ENCODE measurements at regions of chr14 and their contacts with region 1.

Region 1: GRCh38 chr14:21455911-21456667 is at the start of gene CHD8:
- DNase-seq: peak; percentile 100
- ATAC-seq: peak; percentile 99
- H3K4me3 ChIP-seq: peak within 1 kb of the TSS; percentile 90 to 95 (median 93)
- H3K27ac ChIP-seq: peak within 1 kb of the TSS; percentile 96
- H3K4me1 ChIP-seq: peaks cover 38% of the 10 kb centered on the region
- H3K27me3 ChIP-seq: no peaks in the 10 kb centered on the region; a peak in 1 of 5 replicates
- CTCF ChIP-seq: peak; percentile 96
- EP300 ChIP-seq: peak in 1 of 2 experiments; percentile 46; a peak in 1 of 4 replicates
- POLR2A ChIP-seq: peak; percentile 91 to 95
- RAD21 ChIP-seq: peak; percentile 63
- total RNA-seq, gene CHD8: 79.6 and 92.9 TPM in 2 replicates

Region 2: GRCh38 chr14:21383848-21384493 is 72.1 kb before region 1 on chr14 and contains the start of gene SUPT16H:
- CTCF ChIA-PET with region 1: no interaction called
- POLR2A ChIA-PET with region 1: interaction called, 14 read pairs
- in situ Hi-C with region 1: no loop called
- intact Hi-C with region 1: no loop called
- DNase-seq: peak; percentile 94
- ATAC-seq: peak; percentile 91
- H3K4me3 ChIP-seq: peak within 1 kb of the TSS; percentile 74 to 97 (median 90)
- H3K27ac ChIP-seq: peak within 1 kb of the TSS; percentile 92
- H3K4me1 ChIP-seq: peaks cover 43% of the 10 kb centered on the region
- H3K27me3 ChIP-seq: no peaks in the 10 kb centered on the region; a peak in 1 of 5 replicates
- CTCF ChIP-seq: peak; percentile 11; the same call in 1 of the 2 replicates
- EP300 ChIP-seq: peak in 1 of 2 experiments; percentile 25; a peak in 2 of 4 replicates
- POLR2A ChIP-seq: peak; percentile 80 to 92
- RAD21 ChIP-seq: peak; percentile 46; the same call in 1 of the 2 replicates
- total RNA-seq, gene SUPT16H: 230 and 340 TPM in 2 replicates

Region 3: GRCh38 chr14:21408147-21408546 is 47.9 kb before region 1 on chr14:
- CTCF ChIA-PET with region 1: no interaction called
- POLR2A ChIA-PET with region 1: no interaction called
- in situ Hi-C with region 1: no loop called
- intact Hi-C with region 1: no loop called
- DNase-seq: no peak
- ATAC-seq: no peak; the same call in 2 of the 3 replicates
- H3K4me3 ChIP-seq: no peak overlapping the region
- H3K27ac ChIP-seq: no peak overlapping the region
- H3K4me1 ChIP-seq: no peaks in the 10 kb centered on the region
- H3K27me3 ChIP-seq: no peaks in the 10 kb centered on the region
- CTCF ChIP-seq: no peak
- EP300 ChIP-seq: no peak
- POLR2A ChIP-seq: no peak
- RAD21 ChIP-seq: no peak

Region 4: DNA sequence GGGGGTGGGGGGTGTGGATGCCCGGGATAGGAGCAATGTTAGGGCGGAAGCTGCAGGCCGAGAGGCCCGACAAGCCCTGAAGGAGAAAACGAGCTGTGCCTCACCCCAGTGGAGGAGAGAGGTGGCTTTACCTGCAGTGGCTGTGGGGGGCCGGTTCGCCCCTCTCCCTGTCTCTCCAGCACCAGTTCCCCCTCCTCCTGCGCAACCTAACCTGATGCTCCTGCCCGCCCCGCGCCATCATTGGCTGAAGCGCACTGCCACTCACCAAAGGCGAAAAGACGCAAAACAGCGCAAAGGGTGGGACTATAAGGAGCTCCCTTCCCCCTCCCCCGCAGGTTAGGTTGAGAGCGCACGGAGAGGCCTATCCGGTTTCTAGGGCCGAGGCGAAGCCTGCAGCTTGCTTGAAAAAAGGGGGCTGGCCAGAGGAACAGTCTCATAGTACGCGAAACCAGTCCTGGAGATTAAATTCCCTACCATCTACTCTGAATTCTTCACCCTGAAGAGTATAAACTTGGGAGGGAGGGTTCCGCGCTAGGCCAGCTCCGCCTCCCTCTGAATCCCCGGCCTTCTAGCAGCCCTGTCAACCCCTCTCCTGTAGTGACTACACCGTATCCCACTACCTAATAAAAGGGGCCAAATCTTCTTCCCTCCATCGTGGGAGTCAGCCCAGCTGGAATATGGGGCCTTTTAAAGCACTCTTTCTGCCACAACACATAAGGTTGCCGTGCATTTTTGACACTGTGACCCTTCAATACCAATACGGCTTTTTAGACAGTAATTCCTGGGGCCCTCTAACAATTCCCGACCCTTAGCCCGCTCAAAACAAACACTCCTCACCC is 18.8 kb before region 1 on chr14:
- CTCF ChIA-PET with region 1: interaction called, 3 read pairs
- POLR2A ChIA-PET with region 1: interaction called, 211 read pairs
- in situ Hi-C with region 1: no loop called
- intact Hi-C with region 1: loop called (anchors 1 kb)
- DNase-seq: peak; percentile 100
- ATAC-seq: peak; percentile 97
- H3K4me3 ChIP-seq: peak overlapping the region; percentile 85 to 96 (median 87)
- H3K27ac ChIP-seq: peak overlapping the region; percentile 92
- H3K4me1 ChIP-seq: peaks cover 46% of the 10 kb centered on the region
- H3K27me3 ChIP-seq: peaks cover 0 to 4% of the 10 kb centered on the region in 2 experiments; a peak in 1 of 5 replicates
- CTCF ChIP-seq: no peak; the same call in 1 of the 2 replicates
- EP300 ChIP-seq: 0 out of 4 replicates have a peak, but pooled peaks of 1 of the 2 experiments have one; percentile 30
- POLR2A ChIP-seq: peak; percentile 71 to 79
- RAD21 ChIP-seq: peak; percentile 61

Region 5: GRCh38 chr14:21467616-21468015 is 11.5 kb after region 1 on chr14:
- CTCF ChIA-PET with region 1: no interaction called
- POLR2A ChIA-PET with region 1: interaction called, 11 read pairs
- in situ Hi-C with region 1: no loop called
- intact Hi-C with region 1: no loop called
- DNase-seq: no peak
- ATAC-seq: no peak
- H3K4me3 ChIP-seq: no peak overlapping the region
- H3K27ac ChIP-seq: no peak overlapping the region
- H3K4me1 ChIP-seq: no peaks in the 10 kb centered on the region
- H3K27me3 ChIP-seq: no peaks in the 10 kb centered on the region
- CTCF ChIP-seq: no peak
- EP300 ChIP-seq: no peak
- POLR2A ChIP-seq: no peak
- RAD21 ChIP-seq: no peak

Region 6: GRCh38 chr14:21486640-21487087 is 30.6 kb after region 1 on chr14:
- CTCF ChIA-PET with region 1: no interaction called
- POLR2A ChIA-PET with region 1: no interaction called
- in situ Hi-C with region 1: no loop called
- intact Hi-C with region 1: no loop called
- DNase-seq: no peak
- ATAC-seq: no peak
- H3K4me3 ChIP-seq: no peak overlapping the region
- H3K27ac ChIP-seq: no peak overlapping the region
- H3K4me1 ChIP-seq: no peaks in the 10 kb centered on the region
- H3K27me3 ChIP-seq: no peaks in the 10 kb centered on the region
- CTCF ChIP-seq: no peak
- EP300 ChIP-seq: no peak
- POLR2A ChIP-seq: no peak
- RAD21 ChIP-seq: no peak

Region 7: GRCh38 chr14:21498553-21499526 is 42.8 kb after region 1 on chr14:
- CTCF ChIA-PET with region 1: no interaction called
- POLR2A ChIA-PET with region 1: interaction called, 10 read pairs
- in situ Hi-C with region 1: no loop called
- intact Hi-C with region 1: loop called (anchors 5 kb)
- DNase-seq: peak; percentile 77
- ATAC-seq: peak; percentile 78
- H3K4me3 ChIP-seq: no peak overlapping the region
- H3K27ac ChIP-seq: peak overlapping the region; percentile 41
- H3K4me1 ChIP-seq: no peaks in the 10 kb centered on the region
- H3K27me3 ChIP-seq: no peaks in the 10 kb centered on the region
- CTCF ChIP-seq: peak; percentile 79
- EP300 ChIP-seq: no peak
- POLR2A ChIP-seq: 0 out of 4 replicates have a peak, but pooled peaks of 1 of the 2 experiments have one; percentile 18
- RAD21 ChIP-seq: peak; percentile 82

Region 8: GRCh38 chr14:21510735-21511657 is 54.9 kb after region 1 on chr14 and contains the start of gene METTL3:
- CTCF ChIA-PET with region 1: interaction called, 3 read pairs
- POLR2A ChIA-PET with region 1: interaction called, 35 read pairs
- in situ Hi-C with region 1: no loop called
- intact Hi-C with region 1: loop called (anchors 1 kb)
- DNase-seq: peak; percentile 100
- ATAC-seq: peak; percentile 97
- H3K4me3 ChIP-seq: peak within 1 kb of the TSS; percentile 84 to 97 (median 87)
- H3K27ac ChIP-seq: peak within 1 kb of the TSS; percentile 80
- H3K4me1 ChIP-seq: peaks cover 53% of the 10 kb centered on the region
- H3K27me3 ChIP-seq: no peaks in the 10 kb centered on the region; a peak in 1 of 5 replicates
- CTCF ChIP-seq: peak; percentile 53
- EP300 ChIP-seq: 0 out of 4 replicates have a peak, but pooled peaks of 1 of the 2 experiments have one; percentile 1
- POLR2A ChIP-seq: peak; percentile 97
- RAD21 ChIP-seq: peak; percentile 10; the same call in 1 of the 2 replicates
- total RNA-seq, gene METTL3: 114 and 123 TPM in 2 replicates

Region 9: GRCh38 chr14:21703357-21704326 is 247.6 kb after region 1 on chr14:
- CTCF ChIA-PET with region 1: no interaction called
- POLR2A ChIA-PET with region 1: no interaction called
- in situ Hi-C with region 1: no loop called
- intact Hi-C with region 1: no loop called
- DNase-seq: no peak
- ATAC-seq: no peak
- H3K4me3 ChIP-seq: no peak overlapping the region
- H3K27ac ChIP-seq: no peak overlapping the region
- H3K4me1 ChIP-seq: no peaks in the 10 kb centered on the region
- H3K27me3 ChIP-seq: no peaks in the 10 kb centered on the region
- CTCF ChIP-seq: no peak
- EP300 ChIP-seq: no peak
- POLR2A ChIP-seq: no peak
- RAD21 ChIP-seq: no peak

Region 10: DNA sequence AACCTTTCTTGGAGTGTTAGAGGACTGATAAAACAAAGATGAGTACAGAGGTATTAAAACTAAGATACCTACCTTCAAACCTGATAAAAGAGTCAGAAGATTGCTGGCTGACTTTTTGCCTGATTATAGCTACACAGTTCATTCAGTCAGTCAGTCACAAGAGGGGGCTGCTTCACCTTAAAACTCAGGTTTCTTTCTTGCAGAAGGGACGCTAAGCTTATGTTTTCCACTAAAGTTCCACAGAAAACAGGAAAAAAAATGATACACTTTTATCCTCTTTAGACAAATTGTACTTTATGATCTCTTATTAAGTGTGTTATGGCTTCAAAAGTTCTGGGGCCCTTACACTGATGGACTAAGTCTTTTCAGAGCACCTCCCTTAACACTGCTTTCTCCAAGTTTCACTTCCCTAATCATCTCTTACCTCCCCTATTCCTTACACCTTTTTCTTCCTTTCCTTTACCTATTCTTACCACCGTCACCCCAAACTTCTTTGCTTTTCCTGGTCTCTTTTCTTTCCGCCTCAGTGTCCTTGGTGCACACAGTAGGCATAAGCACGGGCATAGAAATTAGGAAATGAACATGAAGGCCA is 666.2 kb after region 1 on chr14:
- CTCF ChIA-PET with region 1: no interaction called
- POLR2A ChIA-PET with region 1: no interaction called
- in situ Hi-C with region 1: no loop called
- intact Hi-C with region 1: no loop called
- DNase-seq: peak; percentile 37
- ATAC-seq: peak; percentile 92
- H3K4me3 ChIP-seq: no peak overlapping the region
- H3K27ac ChIP-seq: no peak overlapping the region
- H3K4me1 ChIP-seq: no peaks in the 10 kb centered on the region
- H3K27me3 ChIP-seq: no peaks in the 10 kb centered on the region
- CTCF ChIP-seq: peak; percentile 62
- EP300 ChIP-seq: no peak
- POLR2A ChIP-seq: no peak
- RAD21 ChIP-seq: no peak